ENCODE measurements at regions of chr1 and their contacts with region 1.

Region 1: GRCh38 chr1:100265931-100266740 is at the start of gene RTCA:
- DNase-seq: peak; percentile 96
- H3K4me3 Mint-ChIP-seq: peak within 1 kb of the TSS; percentile 100
- H3K27ac Mint-ChIP-seq: peak within 1 kb of the TSS; percentile 96
- H3K4me1 Mint-ChIP-seq: peaks cover 35% of the 10 kb centered on the region
- H3K27me3 Mint-ChIP-seq: no peaks in the 10 kb centered on the region
- total RNA-seq, gene RTCA: 36.7 to 37.5 TPM

Region 2: DNA sequence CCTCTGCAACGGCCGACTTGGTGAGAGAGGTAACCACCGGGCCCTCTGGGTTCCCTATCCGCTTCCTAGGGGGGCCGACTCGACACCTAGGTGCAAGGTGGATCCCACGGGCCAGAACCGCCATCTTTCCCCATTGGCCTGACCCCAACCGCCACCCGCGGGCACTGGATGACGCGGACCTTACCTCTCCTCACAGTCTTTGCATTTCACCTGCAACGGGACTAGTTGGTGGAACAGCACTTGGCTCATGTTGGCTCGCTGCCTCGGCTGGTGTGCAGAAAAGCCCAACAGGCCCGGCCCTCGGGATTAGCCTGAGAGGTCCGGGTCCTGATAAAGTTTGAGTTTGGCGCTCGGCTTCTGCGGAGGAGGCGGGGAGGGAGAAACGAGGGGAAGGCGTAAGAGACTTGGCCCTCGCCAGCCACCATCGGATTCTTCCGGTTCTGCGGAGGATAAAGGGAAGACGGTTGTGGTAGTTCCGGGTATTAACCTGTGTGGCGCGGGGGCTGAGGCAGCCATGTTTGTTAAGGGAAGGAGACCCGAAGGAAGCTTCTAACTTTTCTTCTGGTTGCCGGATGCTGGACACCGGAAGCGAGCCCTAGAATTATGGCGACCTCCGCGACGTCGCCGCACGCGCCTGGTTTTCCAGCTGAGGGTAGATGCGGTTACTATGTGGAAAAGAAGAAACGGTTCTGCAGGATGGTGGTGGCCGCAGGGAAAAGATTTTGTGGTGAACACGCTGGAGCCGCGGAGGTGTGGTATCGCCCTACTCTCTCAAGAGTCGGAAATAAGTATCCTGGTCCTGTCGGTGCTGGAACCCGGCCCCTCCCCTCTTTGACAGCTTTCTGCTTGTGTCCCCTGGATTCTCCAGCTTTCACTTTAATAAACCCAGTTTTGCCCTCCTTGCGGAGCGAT is 133.3 kb before region 1 on chr1 and contains the starts of genes SASS6 and TRMT13:
- CTCF ChIA-PET with region 1: no interaction called
- intact Hi-C with region 1: loop called (anchors 1 kb)
- DNase-seq: peak; percentile 97
- H3K4me3 Mint-ChIP-seq: peak within 1 kb of the TSS; percentile 91
- H3K27ac Mint-ChIP-seq: peak within 1 kb of the TSS; percentile 87
- H3K4me1 Mint-ChIP-seq: peaks cover 37% of the 10 kb centered on the region
- H3K27me3 Mint-ChIP-seq: no peaks in the 10 kb centered on the region
- total RNA-seq, gene SASS6: 8.2 TPM
- total RNA-seq, gene TRMT13: 12.9 to 16.6 TPM

Region 3: GRCh38 chr1:100400404-100400803 is 134.3 kb after region 1 on chr1:
- CTCF ChIA-PET with region 1: interaction called, 4 read pairs
- intact Hi-C with region 1: loop called (anchors 2 kb)
- DNase-seq: peak; percentile 73
- H3K4me3 Mint-ChIP-seq: peak overlapping the region; percentile 60
- H3K27ac Mint-ChIP-seq: peak overlapping the region; percentile 94
- H3K4me1 Mint-ChIP-seq: peaks cover 75% of the 10 kb centered on the region
- H3K27me3 Mint-ChIP-seq: no peaks in the 10 kb centered on the region

Region 4: GRCh38 chr1:100543640-100544039 is 277.5 kb after region 1 on chr1:
- CTCF ChIA-PET with region 1: no interaction called
- intact Hi-C with region 1: loop called (anchors 5 kb)
- DNase-seq: peak; percentile 75
- H3K4me3 Mint-ChIP-seq: no peak overlapping the region
- H3K27ac Mint-ChIP-seq: no peak overlapping the region
- H3K4me1 Mint-ChIP-seq: peaks cover 2% of the 10 kb centered on the region
- H3K27me3 Mint-ChIP-seq: peaks cover 23% of the 10 kb centered on the region

Measured in activated naive CD4-positive, alpha-beta T cell treated with anti-CD3 and anti-CD28 coated beads for 36 hours (primary cell).